ENCODE measurements at regions of chr19 and their contacts with region 1.

Region 1: GRCh38 chr19:18846862-18847548 is 15.2 kb downstream of the UPF1 start:
- DNase-seq: peak; percentile 53
- H3K4me3 ChIP-seq: no peak overlapping the region
- H3K27ac ChIP-seq: no peak overlapping the region
- H3K27me3 ChIP-seq: no peaks in the 10 kb centered on the region
- CTCF ChIP-seq: peak; percentile 96

Region 2: DNA sequence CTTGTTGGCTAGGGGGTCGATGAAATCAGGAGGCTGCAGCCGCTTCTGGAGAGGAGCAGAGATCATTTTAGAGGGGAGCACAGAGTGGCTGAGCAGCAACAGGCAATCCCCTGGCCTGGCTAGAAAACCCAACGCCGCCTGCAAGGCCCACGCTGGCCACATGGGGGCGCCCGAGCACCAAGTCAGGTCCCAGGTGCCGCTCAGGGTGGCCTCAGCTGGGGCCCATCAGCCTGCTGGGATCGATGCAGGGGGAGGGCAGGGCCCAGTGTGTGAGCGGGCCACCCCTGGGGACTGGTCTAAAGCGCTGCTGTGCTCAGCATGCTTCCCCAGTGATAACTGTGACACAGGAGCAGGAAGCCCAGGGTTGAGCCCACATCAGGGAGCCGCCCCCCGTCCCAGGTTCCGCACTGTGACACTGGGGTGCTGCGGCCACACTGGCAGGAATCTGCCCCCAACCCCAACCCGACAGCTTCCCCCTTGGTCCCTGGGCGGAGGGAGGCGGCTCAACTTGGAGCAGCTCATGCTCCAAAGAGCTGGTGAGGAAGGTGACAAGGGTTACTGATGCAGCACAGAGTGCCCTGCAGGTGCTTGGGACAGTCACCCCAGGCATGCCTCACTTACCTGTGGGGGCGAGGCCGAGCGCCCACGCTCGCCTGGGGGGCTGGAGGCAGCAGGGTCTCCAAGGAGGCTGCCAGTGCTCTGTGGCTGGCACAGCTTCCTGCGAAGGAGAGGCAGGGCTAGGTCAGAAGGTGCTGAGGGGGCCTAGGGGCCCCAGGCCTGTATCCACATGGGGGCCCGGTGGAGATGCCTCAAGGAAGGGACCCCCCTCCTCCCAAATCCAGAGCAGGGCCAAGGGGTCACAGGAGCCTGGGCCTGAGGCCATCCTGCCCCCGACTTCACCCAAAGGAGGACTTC is 395.8 kb before region 1 on chr19:
- CTCF ChIA-PET with region 1: interaction called, 12 read pairs
- POLR2A ChIA-PET with region 1: no interaction called
- DNase-seq: no peak
- H3K4me3 ChIP-seq: no peak overlapping the region
- H3K27ac ChIP-seq: peak overlapping the region; percentile 11
- H3K27me3 ChIP-seq: no peaks in the 10 kb centered on the region
- CTCF ChIP-seq: peak; percentile 95

Region 3: DNA sequence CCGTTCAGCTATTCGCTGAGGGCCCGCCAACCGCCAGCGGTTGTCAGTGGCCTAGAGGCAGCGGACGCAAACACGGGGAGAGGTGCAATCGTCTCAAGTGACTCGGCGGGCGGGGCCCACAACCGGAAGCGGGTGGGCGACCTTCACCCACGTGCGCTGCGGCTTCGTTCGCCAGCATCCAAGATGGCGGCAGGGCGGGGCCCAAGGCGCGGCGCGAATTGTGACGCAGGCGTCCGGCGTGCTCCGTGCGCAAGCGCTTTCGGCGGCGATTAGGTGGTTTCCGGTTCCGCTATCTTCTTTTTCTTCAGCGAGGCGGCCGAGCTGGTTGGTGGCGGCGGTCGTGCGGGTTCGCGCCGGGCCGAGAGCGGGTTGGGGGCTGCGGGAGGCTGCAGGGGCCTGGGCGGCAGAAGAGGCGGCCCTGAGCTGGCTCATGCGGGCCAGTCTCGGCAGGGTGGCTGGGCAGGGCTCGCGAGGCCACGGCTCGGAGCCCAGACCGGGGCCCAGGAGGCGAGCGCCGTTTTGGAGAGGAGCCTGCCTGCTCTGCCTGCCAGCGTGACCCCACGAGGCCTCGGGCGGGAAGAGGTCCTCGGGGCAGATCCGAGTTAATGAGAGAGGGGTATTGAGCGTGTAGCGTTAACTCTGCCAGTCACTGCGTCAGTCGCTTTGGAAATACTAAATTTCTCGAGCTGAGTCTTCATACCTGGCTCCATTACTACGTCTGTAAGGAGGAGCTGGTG is 275.3 kb before region 1 on chr19 and contains the start of gene UBA52:
- CTCF ChIA-PET with region 1: interaction called, 12 read pairs
- POLR2A ChIA-PET with region 1: interaction called, 3 read pairs
- DNase-seq: peak; percentile 91
- H3K4me3 ChIP-seq: peak within 1 kb of the TSS; percentile 98
- H3K27ac ChIP-seq: peak within 1 kb of the TSS; percentile 83
- H3K27me3 ChIP-seq: no peaks in the 10 kb centered on the region
- CTCF ChIP-seq: no peak
- polyA plus RNA-seq, gene UBA52: 1,723 and 2,315 TPM in 2 replicates

Region 4: GRCh38 chr19:18588611-18589379 is 258.2 kb before region 1 on chr19 and contains the start of gene REX1BD:
- CTCF ChIA-PET with region 1: interaction called, 50 read pairs
- POLR2A ChIA-PET with region 1: interaction called, 7 read pairs
- DNase-seq: no peak
- H3K4me3 ChIP-seq: peak within 1 kb of the TSS; percentile 82
- H3K27ac ChIP-seq: peak within 1 kb of the TSS; percentile 77
- H3K27me3 ChIP-seq: no peaks in the 10 kb centered on the region
- CTCF ChIP-seq: peak; percentile 82
- polyA plus RNA-seq, gene REX1BD: 17.6 TPM in 2 replicates

Region 5: GRCh38 chr19:18594096-18594823 is 252.7 kb before region 1 on chr19:
- CTCF ChIA-PET with region 1: interaction called, 50 read pairs
- POLR2A ChIA-PET with region 1: interaction called, 7 read pairs
- DNase-seq: no peak
- H3K4me3 ChIP-seq: peak overlapping the region; percentile 46
- H3K27ac ChIP-seq: no peak overlapping the region
- H3K27me3 ChIP-seq: peaks cover under 1% of the 10 kb centered on the region
- CTCF ChIP-seq: peak; percentile 69

Region 6: DNA sequence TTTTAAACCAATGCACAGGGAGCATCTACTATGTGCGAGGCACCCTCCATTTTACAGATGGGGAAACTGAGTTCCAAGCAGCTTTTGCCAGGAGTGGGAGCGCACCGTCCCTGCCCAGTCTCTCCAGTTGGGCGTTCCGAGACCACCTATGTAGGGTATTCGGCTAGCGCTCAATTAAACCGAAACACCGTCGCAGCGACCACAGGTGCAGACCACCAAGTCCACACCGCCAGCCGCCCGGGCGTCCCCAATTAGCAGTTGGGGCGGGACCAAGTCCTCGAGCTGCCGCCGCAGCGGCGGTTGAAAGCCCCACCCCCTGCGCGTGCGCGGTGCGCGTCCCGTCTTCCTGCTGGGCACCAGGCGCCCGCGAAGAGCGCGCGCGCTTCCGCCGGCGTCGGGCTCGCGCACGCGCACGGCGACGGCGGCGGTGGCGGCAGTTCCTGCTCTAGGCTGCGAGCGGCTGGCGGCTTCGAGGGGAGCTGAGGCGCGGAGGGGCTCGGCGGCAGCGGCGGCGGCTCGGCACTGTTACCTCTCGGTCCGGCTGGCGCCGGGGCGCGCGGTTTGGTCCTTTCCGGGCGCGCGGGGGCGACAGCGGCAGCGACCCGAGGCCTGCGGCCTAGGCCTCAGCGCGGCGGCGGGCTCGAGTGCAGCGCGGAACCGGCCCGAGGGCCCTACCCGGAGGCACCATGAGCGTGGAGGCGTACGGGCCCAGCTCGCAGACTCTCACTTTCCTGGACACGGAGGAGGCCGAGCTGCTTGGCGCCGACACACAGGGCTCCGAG is 15.3 kb before region 1 on chr19 and contains the start of gene UPF1:
- CTCF ChIA-PET with region 1: interaction called, 41 read pairs
- POLR2A ChIA-PET with region 1: interaction called, 3 read pairs
- DNase-seq: peak; percentile 65
- H3K4me3 ChIP-seq: peak within 1 kb of the TSS; percentile 81
- H3K27ac ChIP-seq: no peak within 1 kb of the TSS
- H3K27me3 ChIP-seq: peaks cover 2% of the 10 kb centered on the region
- CTCF ChIP-seq: 0 out of 2 replicates have a peak, but pooled peaks have one; percentile 7
- polyA plus RNA-seq, gene UPF1: 28.2 and 33.2 TPM in 2 replicates